AG04450 (cell line): ENCODE measurements at regions of chr9 and their contacts with region 1.

Region 1: GRCh38 chr9:98610711-98611110 is 98.0 kb downstream of the GABBR2 start:
- DNase-seq: no peak
- H3K4me3 ChIP-seq: no peak overlapping the region
- H3K27ac ChIP-seq: no peak overlapping the region
- H3K27me3 ChIP-seq: peaks cover 8% of the 10 kb centered on the region
- CTCF ChIP-seq: no peak

Region 2: DNA sequence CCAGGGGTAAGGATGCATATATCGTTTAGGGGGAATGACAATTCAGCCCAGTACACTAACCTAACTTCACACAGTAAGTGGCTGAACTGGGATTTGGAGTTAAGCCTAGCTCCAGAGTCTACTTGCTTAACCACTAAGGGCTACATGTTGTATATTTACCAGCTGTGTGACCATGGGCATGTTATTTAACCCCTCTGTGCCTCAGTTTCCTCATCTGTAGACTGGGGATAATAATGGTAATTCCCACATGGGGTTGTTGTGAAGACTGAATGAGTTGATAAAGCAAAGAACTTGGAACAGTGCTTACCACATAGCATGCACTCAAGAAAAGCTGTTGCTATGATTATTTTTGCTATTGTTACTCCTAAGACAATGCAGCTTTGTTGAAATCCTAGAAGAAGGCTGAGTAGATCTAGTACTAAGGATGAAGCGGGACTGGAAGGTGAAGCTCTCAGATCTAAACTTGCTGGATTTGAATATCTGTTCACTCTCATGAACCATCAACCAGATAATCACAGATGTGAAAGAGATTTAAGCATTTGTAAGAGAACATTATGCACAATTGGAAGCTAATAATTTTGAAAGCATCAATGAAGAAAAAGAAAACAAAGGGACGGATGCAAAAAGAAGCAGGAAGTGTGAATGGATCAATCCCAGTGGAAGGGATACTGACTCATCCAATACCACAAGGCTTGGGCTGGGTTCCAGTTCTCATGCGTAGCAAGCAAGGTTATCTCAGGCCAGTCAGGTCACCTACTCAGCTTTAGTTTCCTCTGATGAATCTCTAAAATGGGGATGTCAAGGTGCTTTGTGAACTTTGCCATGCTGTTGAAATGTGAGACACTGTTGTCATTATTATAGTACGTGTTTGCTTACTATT is 276.8 kb before region 1 on chr9:
- CTCF ChIA-PET with region 1: no interaction called
- POLR2A ChIA-PET with region 1: interaction called, 11 read pairs
- DNase-seq: peak; percentile 44
- H3K4me3 ChIP-seq: no peak overlapping the region
- H3K27ac ChIP-seq: no peak overlapping the region
- H3K27me3 ChIP-seq: no peaks in the 10 kb centered on the region
- CTCF ChIP-seq: no peak

Region 3: GRCh38 chr9:98584059-98584458 is 26.7 kb before region 1 on chr9:
- CTCF ChIA-PET with region 1: no interaction called
- POLR2A ChIA-PET with region 1: no interaction called
- DNase-seq: no peak
- H3K4me3 ChIP-seq: no peak overlapping the region
- H3K27ac ChIP-seq: no peak overlapping the region
- H3K27me3 ChIP-seq: peaks cover 26% of the 10 kb centered on the region
- CTCF ChIP-seq: no peak